ENCODE measurements at regions of chr13 and their contacts with region 1.

Region 1: GRCh38 chr13:46679369-46680120 is 117.4 kb downstream of the ESD start:
- DNase-seq: peak; percentile 37 to 72
- H3K4me3 ChIP-seq: peak overlapping the region; percentile 22 to 30
- H3K27ac ChIP-seq: peak overlapping the region; percentile 83 to 93
- H3K4me1 ChIP-seq: peaks cover 0 to 5% of the 10 kb centered on the region in 2 donors
- H3K27me3 ChIP-seq: no peaks in the 10 kb centered on the region
- CTCF ChIP-seq: peak in 1 of 4 experiments; percentile 20
- POLR2A ChIP-seq: peak; percentile 59 to 68

Region 2: DNA sequence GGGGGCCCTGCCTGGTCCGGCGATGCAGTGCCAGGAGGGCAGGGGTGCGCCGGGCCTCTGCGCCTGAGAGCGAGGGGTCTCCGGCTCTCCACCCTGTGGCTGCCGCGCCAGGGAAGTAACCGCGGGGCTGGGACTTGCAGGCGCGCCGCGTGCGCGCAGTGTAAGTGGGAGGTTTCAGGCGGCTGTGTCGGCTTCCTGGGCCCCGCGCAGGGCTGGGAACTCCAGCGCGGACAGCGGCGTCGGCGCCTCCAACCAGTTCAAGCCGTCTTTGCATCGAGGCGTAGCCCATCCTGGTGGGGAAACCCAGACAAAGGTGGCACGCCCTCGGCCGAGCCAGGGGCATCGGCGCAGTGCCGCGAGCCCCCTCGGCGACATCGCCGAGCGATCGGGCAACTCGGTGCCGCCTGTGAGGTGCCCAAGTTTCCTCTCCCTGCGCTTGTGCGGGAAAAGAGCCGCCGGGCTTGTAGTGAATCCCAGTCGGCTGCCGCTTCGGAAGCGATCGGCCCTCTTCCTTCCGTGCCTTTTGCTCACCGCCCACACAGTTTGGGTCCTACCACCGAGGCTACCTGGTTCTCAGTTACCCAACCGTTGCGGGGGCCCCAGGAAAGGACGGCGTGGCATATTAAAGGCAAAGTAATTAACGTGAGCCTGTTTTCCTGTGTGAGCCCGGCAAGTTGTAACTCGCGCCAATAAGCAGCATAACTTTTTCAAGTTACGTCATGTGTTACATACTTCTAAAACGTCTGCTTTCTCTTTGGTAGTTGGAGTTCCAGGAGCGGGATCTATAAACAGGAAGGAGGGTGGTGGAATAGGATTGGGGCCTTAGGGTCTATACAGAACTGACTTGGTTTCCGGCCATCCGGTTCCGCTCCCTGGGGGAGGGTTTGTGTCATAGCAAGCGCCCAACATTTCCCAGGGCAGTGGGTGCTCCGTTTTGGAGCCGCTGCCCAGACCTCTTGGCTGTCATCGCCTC is 125.4 kb before region 1 on chr13:
- intact Hi-C with region 1: loop called (anchors 2 kb)
- DNase-seq: peak; percentile 62 to 67
- H3K4me3 ChIP-seq: peak overlapping the region; percentile 98 to 99
- H3K27ac ChIP-seq: peak overlapping the region; percentile 98 to 99
- H3K4me1 ChIP-seq: peaks cover 0 to 7% of the 10 kb centered on the region in 2 donors
- H3K27me3 ChIP-seq: no peaks in the 10 kb centered on the region
- CTCF ChIP-seq: peak in 2 of 4 experiments; percentile 22 to 36
- POLR2A ChIP-seq: peak; percentile 20 to 24